BJ (cell line): ENCODE measurements at regions of chr17 and their contacts with region 1.

Region 1: DNA sequence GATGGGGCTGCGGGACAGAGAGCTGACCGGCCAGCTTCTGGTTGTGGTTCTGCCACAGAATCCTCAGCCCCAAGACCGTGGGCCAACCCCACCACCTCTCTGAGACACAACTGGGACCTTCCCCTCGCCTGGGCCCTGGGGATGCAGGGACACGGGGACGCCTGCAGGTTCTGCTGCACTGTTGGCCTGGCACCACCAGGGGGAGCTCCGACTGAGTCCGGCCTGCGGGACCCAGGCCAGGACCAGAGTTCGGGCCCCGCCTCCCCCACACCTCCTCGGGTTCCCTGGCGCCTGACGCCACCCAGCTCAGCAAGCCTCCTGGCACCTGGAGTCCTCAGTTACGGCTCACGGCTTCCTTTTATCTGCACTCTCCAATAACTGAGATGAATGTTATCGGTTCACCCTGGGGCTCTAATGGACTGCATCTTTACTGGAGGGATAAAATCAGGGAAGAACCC is 27.3 kb downstream of the TBC1D16 start:
- DNase-seq: no peak
- H3K4me3 ChIP-seq: no peak overlapping the region
- H3K27me3 ChIP-seq: no peaks in the 10 kb centered on the region
- CTCF ChIP-seq: peak; percentile 97

Region 2: GRCh38 chr17:79930877-79931816 is 77.3 kb before region 1 on chr17:
- CTCF ChIA-PET with region 1: no interaction called
- POLR2A ChIA-PET with region 1: no interaction called
- DNase-seq: no peak
- H3K4me3 ChIP-seq: no peak overlapping the region
- H3K27me3 ChIP-seq: peaks cover 25% of the 10 kb centered on the region
- CTCF ChIP-seq: no peak

Region 3: DNA sequence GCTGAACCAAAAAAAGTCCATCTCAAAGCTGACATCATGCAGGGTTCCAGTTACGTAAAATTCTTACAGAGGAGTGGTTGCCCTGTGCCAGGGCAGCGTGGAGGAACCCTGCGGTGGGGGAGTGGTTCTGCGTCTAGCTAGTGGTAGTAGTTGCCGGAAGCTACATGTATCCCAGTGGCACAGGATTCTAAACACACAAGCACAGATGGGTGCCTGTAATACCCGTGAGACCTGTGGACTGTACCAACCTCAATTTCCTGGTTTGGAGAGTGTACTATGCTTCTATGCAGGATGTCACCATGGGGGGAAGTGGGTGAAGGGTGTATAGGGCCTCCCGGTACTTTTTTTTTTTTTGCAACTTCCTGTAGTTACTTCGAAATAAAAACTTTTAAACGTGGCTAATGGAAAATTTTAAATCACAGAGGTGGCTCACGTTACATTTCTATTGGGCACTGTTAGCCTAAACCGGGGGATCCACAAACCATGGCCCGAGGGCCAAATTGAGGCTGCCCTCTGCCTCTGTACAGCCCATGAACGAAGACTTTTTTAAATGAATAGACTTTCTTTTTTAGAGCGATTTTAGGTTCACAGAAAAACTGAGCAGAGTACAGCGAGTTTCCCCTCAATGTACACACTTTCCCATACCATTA is 11.3 kb before region 1 on chr17:
- CTCF ChIA-PET with region 1: interaction called, 21 read pairs
- POLR2A ChIA-PET with region 1: no interaction called
- DNase-seq: no peak
- H3K4me3 ChIP-seq: no peak overlapping the region
- H3K27me3 ChIP-seq: no peaks in the 10 kb centered on the region
- CTCF ChIP-seq: no peak

Region 4: GRCh38 chr17:80029258-80029974 is 21.0 kb after region 1 on chr17:
- CTCF ChIA-PET with region 1: interaction called, 51 read pairs
- POLR2A ChIA-PET with region 1: no interaction called
- DNase-seq: peak; percentile 43
- H3K4me3 ChIP-seq: no peak overlapping the region
- H3K27me3 ChIP-seq: no peaks in the 10 kb centered on the region
- CTCF ChIP-seq: no peak

Region 5: DNA sequence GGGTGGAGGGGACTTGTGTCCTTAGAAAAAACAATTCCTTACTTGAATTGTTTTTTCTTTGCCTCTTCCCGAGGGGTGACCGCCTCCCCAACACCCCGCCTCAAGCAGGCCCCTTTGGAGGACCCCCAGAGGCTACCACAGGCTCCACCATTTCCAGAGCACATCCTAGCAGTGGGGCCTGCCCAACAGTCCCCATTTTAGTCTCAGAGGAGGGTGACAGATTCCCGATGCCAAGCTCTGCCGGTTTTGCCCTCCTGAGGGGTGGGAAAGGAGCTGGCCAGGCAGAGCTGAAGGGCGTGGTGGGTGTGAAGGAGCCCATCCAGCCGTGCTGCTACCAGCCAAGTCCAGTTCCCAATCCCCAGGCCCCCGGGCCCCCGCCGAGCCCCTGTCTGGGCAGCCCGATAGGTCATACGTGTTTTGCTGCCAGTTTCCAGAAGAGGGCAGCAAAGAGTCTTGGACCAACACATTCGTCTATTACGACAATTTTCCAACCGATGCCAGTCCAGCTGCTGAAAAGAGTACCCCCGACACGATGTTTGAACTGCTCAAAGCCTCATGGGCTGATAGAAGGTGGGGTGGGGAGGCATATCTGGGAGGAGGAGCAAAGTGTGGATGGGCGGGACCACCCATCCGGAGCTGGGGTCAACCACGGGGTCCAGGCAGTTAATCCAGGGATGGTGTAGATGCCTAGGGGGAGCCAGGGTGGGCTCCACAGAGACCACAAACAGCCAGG is 74.2 kb after region 1 on chr17:
- CTCF ChIA-PET with region 1: interaction called, 16 read pairs
- POLR2A ChIA-PET with region 1: no interaction called
- DNase-seq: no peak
- H3K4me3 ChIP-seq: no peak overlapping the region
- H3K27me3 ChIP-seq: peaks cover 2% of the 10 kb centered on the region
- CTCF ChIP-seq: peak; percentile 86